Activated CD4-positive, alpha-beta T cell treated with anti-CD3 and anti-CD28 coated beads, Interleukin-2, amount 10 ng/mL, durations not matched to agents 24 days and 14 days (primary cell): ENCODE measurements at regions of chr1 and their contacts with region 1.

Region 1: DNA sequence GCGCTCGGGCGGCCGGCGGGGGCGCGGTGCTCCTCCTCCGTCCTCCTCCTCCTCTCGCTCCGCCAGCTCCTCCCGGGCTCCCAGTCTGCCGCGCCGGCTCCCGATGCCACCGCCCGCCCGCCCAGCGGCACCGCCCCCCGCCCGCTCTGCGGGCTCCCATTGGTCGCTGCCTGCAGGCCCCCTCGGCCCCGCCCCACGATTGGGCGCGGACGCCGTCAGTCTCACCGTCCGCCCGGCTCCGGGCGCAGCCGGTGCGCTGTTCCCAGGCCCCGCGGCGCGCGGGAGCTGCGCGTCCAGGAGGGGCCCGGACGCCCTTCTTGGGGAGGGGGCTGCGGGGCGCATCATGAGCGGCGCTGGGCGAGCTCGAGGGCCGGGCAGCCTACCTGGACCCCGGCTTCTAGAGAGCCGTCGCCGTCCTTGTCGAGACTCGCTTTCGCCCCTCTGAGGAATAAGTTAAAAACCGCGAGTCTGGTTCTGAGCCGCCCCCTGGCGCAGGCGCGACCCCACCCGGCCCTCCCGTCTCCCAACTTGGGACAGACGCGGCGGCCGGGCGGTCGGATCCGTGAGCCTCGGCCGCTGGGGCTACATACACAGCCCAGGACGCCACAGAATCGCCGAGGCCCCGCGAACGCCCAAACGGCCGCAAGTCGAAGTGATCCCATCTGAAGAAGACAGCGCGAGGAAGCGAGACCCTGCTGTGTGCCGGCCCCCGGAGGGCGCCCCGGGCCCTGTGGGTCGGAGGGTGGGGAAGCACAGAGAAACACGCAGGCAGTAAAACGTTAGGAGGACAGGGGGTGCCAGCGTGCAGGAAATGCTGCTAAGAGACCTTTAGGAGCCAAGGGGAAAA is at the start of gene SIPA1L2:
- DNase-seq: peak; percentile 97
- H3K4me3 Mint-ChIP-seq: peak within 1 kb of the TSS; percentile 87
- H3K27ac Mint-ChIP-seq: peak within 1 kb of the TSS; percentile 76
- H3K4me1 Mint-ChIP-seq: peaks cover 22% of the 10 kb centered on the region
- H3K27me3 Mint-ChIP-seq: peaks cover 58% of the 10 kb centered on the region
- total RNA-seq, gene SIPA1L2: 3.1 and 4.1 TPM in 2 replicates

Region 2: GRCh38 chr1:231866392-231867331 is 763.6 kb before region 1 on chr1:
- intact Hi-C with region 1: loop called (anchors 1 kb)
- DNase-seq: peak; percentile 84
- H3K4me3 Mint-ChIP-seq: no peak overlapping the region
- H3K27ac Mint-ChIP-seq: no peak overlapping the region
- H3K4me1 Mint-ChIP-seq: peaks cover 4% of the 10 kb centered on the region
- H3K27me3 Mint-ChIP-seq: no peaks in the 10 kb centered on the region

Region 3: GRCh38 chr1:231971397-231972104 is 658.7 kb before region 1 on chr1:
- intact Hi-C with region 1: loop called (anchors 10 kb)
- DNase-seq: no peak
- H3K4me3 Mint-ChIP-seq: no peak overlapping the region
- H3K27ac Mint-ChIP-seq: no peak overlapping the region
- H3K4me1 Mint-ChIP-seq: peaks cover 22% of the 10 kb centered on the region
- H3K27me3 Mint-ChIP-seq: peaks cover 2% of the 10 kb centered on the region

Region 4: GRCh38 chr1:232457595-232457994 is 172.7 kb before region 1 on chr1:
- intact Hi-C with region 1: loop called (anchors 10 kb)
- DNase-seq: peak; percentile 67
- H3K4me3 Mint-ChIP-seq: no peak overlapping the region
- H3K27ac Mint-ChIP-seq: no peak overlapping the region
- H3K4me1 Mint-ChIP-seq: peaks cover 6% of the 10 kb centered on the region
- H3K27me3 Mint-ChIP-seq: no peaks in the 10 kb centered on the region

Region 5: DNA sequence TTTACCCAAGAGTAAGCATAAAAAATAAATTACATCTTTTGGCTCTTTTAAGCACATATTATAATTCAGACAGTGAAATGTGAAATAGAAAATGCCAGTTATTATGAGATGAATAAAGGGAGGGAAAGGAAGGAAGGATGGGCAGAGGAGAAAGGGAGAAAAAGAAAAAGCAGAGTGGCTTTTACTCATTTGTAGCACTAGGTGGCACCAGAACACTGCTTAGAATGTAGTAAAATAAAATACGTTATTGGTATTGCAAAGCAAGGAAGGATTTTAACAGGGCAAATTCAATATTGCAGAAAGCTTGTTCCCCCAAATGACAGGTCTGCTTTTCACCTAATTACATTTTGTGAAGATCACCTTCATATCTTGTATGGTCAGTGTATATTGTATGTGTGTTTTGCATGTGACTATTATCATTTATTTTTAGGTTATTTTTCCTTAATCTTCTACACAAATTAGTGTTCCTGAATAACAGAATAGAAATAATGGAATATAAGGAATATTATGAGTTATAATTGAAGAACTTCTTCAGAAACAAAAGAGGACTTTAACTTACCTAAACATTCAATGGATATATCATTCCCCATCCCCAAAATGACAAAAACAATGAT is 674.3 kb after region 1 on chr1:
- intact Hi-C with region 1: loop called (anchors 10 kb)
- DNase-seq: no peak
- H3K4me3 Mint-ChIP-seq: no peak overlapping the region
- H3K27ac Mint-ChIP-seq: no peak overlapping the region
- H3K4me1 Mint-ChIP-seq: no peaks in the 10 kb centered on the region
- H3K27me3 Mint-ChIP-seq: peaks cover 41% of the 10 kb centered on the region